ENCODE measurements at regions of chr12 and their contacts with region 1.

Region 1: GRCh38 chr12:90978117-90978770 is 23.3 kb upstream of the CCER1 start:
- DNase-seq: no peak
- H3K4me3 Mint-ChIP-seq: no peak overlapping the region
- H3K27ac Mint-ChIP-seq: no peak overlapping the region
- H3K4me1 Mint-ChIP-seq: no peaks in the 10 kb centered on the region
- H3K27me3 Mint-ChIP-seq: peaks cover 5% of the 10 kb centered on the region

Region 2: GRCh38 chr12:91109148-91109564 is 130.9 kb after region 1 on chr12:
- intact Hi-C with region 1: loop called (anchors 1 kb)
- DNase-seq: peak; percentile 31
- H3K4me3 Mint-ChIP-seq: no peak overlapping the region
- H3K27ac Mint-ChIP-seq: no peak overlapping the region
- H3K4me1 Mint-ChIP-seq: no peaks in the 10 kb centered on the region
- H3K27me3 Mint-ChIP-seq: no peaks in the 10 kb centered on the region

Region 3: GRCh38 chr12:91316907-91317269 is 338.6 kb after region 1 on chr12:
- intact Hi-C with region 1: no loop called
- DNase-seq: no peak
- H3K4me3 Mint-ChIP-seq: no peak overlapping the region
- H3K27ac Mint-ChIP-seq: no peak overlapping the region
- H3K4me1 Mint-ChIP-seq: no peaks in the 10 kb centered on the region
- H3K27me3 Mint-ChIP-seq: no peaks in the 10 kb centered on the region

Measured in activated T-helper 2 cell treated with anti-CD3 and anti-CD28 coated beads, Interferon-gamma antibody, Interleukin-2, Interleukin-4, amounts not matched to agents 10 μg/mL and 5 μg/mL and 100 μg/mL, durations not matched to agents 14 hours and 24 hours and 36 hours (primary cell).